Activated naive CD4-positive, alpha-beta T cell treated with anti-CD3 and anti-CD28 coated beads, Interleukin-2, amount 10 ng/mL, durations not matched to agents 7 days and 5 days (primary cell): ENCODE measurements at regions of chrX and their contacts with region 1.

Region 1: DNA sequence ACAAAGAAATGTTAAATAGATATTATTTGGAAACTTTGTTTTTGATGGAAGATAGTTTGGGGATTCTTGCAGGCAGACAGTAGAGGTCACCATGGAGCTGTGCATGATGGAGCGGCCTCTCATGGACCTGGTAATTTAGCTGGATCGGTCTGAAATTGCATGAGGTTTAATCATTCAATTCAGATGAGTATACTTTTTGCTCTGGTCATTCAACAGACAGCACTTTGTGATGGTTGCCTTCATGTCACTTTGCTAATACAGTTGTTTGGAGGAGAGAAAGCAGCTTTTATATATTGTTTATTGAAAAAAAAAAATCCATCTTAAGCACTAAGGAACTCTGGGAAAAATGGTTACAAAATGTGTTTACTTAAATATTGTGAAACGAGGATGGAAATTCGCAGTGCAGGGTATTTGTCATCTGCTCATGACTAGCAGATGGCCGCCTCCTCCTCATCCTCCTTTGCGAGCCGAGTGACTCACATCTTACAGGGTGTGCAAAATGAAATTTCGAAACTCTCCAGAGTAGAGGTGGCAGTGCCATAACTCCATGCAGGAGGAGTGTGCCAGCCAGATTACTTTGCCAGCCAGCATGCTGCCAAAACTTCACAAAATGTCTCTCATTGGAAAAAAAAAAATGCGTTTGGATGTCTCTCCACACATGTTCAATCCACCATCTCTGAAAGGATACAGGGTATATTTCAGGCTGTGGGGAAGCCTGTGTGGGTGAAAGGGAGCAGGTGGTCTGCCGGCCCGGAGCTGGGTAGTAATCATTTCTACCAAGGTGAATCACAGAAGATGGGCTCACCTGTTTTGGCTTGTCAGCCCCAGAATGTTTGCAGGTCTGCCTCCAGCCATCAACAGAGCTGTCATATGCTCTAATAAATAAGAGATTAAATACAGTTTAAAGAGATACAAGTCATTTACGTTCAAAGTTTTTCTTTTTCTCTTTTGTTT is 314.9 kb upstream of the DIPK2B start:
- DNase-seq: peak; percentile 53
- H3K4me3 Mint-ChIP-seq: no peak overlapping the region
- H3K27ac Mint-ChIP-seq: no peak overlapping the region
- H3K4me1 Mint-ChIP-seq: peaks cover 4% of the 10 kb centered on the region
- H3K27me3 Mint-ChIP-seq: no peaks in the 10 kb centered on the region

Region 2: DNA sequence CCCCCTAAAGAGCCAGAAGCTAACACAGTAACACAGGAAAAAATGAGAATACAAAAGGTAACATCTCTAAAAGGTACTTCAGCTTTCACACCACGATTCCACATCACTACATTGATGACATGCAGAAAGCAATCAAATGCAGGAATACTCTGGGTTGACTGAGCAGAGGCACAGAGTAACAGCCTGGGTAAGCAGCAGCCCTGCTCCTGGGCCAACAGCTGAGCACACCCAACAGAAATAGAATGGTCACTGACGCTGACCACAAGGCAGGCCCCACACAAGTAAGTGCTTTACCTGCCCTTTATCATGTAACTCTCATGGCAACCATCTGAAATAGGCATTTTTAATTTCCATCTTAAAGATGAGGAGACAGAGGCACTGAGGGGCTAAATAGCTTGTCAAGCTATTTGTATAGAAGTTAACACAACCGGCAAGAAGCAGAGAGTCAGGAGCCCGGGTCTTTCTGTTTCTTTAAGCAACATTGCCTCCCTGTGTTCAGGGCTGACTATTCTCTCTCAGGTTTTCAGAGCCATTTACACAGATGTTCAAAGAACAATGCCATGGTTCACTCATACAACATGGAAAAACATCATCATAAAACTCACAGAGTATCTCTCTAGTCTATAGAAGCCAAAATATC is 860.8 kb after region 1 on chrX:
- CTCF ChIA-PET with region 1: interaction called, 10 read pairs
- DNase-seq: peak; percentile 33
- H3K4me3 Mint-ChIP-seq: no peak overlapping the region
- H3K27ac Mint-ChIP-seq: no peak overlapping the region
- H3K4me1 Mint-ChIP-seq: peaks cover 2% of the 10 kb centered on the region
- H3K27me3 Mint-ChIP-seq: peaks cover 5% of the 10 kb centered on the region